ENCODE measurements at regions of chr6 and their contacts with region 1.

Region 1: DNA sequence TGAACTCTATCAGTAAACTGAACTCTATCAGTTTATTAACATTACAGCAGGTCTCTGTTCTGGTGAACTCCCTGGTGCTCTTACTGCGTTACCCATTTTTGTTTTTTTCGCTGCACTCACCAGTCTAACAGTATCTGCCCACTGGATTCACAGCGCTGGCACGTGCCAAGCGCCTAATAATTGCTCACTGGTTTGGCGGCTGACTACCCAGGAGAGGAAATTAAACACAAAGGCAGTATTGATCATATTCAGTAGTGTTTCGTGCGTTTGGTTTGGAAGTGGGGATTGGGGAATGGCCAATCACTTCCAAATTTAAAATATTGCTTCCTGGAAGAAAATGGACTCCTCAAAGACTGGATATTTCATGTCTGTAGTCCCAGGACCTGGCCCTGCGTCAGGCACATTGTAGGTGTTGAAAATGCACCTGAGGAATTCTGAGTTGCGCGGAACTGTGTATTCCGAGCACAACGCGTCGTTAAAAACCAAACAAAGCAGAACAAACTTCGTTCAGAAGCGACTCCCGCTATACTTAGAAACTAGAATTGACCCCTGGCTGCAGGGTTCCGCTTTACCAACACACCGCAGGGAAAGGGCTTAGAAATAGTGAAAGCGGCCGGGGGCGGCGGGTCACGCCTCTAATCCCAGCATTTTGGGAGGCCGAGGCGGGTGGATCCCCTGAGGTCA is 1.1 kb upstream of the RPS12 start:
- DNase-seq: peak; percentile 33
- ATAC-seq: peak; percentile 17
- H3K4me3 Mint-ChIP-seq: peak overlapping the region; percentile 98
- H3K27ac Mint-ChIP-seq: peak overlapping the region; percentile 99
- H3K4me1 Mint-ChIP-seq: peaks cover 47% of the 10 kb centered on the region
- H3K27me3 Mint-ChIP-seq: no peaks in the 10 kb centered on the region
- CTCF ChIP-seq: no peak

Region 2: GRCh38 chr6:131627724-131628682 is 1185.3 kb before region 1 on chr6 and contains the start of gene MED23:
- CTCF ChIA-PET with region 1: no interaction called
- POLR2A ChIA-PET with region 1: no interaction called
- intact Hi-C with region 1: loop called (anchors 2 kb)
- DNase-seq: peak; percentile 98
- ATAC-seq: peak; percentile 95
- H3K4me3 Mint-ChIP-seq: peak within 1 kb of the TSS; percentile 99
- H3K27ac Mint-ChIP-seq: peak within 1 kb of the TSS; percentile 94
- H3K4me1 Mint-ChIP-seq: peaks cover 31% of the 10 kb centered on the region
- H3K27me3 Mint-ChIP-seq: no peaks in the 10 kb centered on the region
- CTCF ChIP-seq: peak; percentile 62
- total RNA-seq, gene MED23: 45.3 and 51.0 TPM in 2 replicates

Region 3: GRCh38 chr6:132354512-132355167 is 458.7 kb before region 1 on chr6:
- CTCF ChIA-PET with region 1: no interaction called
- POLR2A ChIA-PET with region 1: interaction called, 4 read pairs
- intact Hi-C with region 1: loop called (anchors 5 kb)
- DNase-seq: peak; percentile 80
- ATAC-seq: peak; percentile 92
- H3K4me3 Mint-ChIP-seq: peak overlapping the region; percentile 77
- H3K27ac Mint-ChIP-seq: peak overlapping the region; percentile 92
- H3K4me1 Mint-ChIP-seq: peaks cover 74% of the 10 kb centered on the region
- H3K27me3 Mint-ChIP-seq: no peaks in the 10 kb centered on the region
- CTCF ChIP-seq: no peak

Region 4: GRCh38 chr6:132498638-132499037 is 314.7 kb before region 1 on chr6:
- CTCF ChIA-PET with region 1: no interaction called
- POLR2A ChIA-PET with region 1: interaction called, 20 read pairs
- intact Hi-C with region 1: no loop called
- DNase-seq: no peak
- ATAC-seq: peak; percentile 67
- H3K4me3 Mint-ChIP-seq: peak overlapping the region; percentile 55
- H3K27ac Mint-ChIP-seq: peak overlapping the region; percentile 92
- H3K4me1 Mint-ChIP-seq: peaks cover 90% of the 10 kb centered on the region
- H3K27me3 Mint-ChIP-seq: no peaks in the 10 kb centered on the region
- CTCF ChIP-seq: no peak

Region 5: DNA sequence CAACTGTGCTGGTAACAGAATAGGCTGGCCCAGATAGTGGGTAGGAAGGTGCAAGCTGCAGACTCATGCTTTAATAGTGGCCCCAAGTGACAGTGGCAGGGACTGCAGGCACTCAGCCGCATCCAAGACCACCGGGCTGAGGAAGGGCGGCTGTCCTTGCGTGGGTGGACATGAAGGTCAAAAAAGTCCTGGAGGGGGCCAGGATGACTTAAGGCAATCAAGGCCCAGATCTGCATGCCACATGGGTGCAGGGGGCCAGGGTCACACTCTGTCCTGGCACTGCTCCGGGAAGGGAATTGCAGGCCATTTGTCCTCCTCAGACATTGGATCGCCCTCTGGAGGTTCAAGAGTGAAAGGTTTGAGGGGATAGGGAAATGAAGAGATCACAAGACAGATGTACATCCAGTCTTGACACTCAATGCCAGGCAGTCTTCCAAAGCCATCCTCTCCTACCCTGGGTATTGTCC is 45.2 kb before region 1 on chr6:
- CTCF ChIA-PET with region 1: no interaction called
- POLR2A ChIA-PET with region 1: interaction called, 48 read pairs
- intact Hi-C with region 1: loop called (anchors 1 kb)
- DNase-seq: peak; percentile 33
- ATAC-seq: peak; percentile 79
- H3K4me3 Mint-ChIP-seq: peak overlapping the region; percentile 47
- H3K27ac Mint-ChIP-seq: no peak overlapping the region
- H3K4me1 Mint-ChIP-seq: peaks cover 18% of the 10 kb centered on the region
- H3K27me3 Mint-ChIP-seq: no peaks in the 10 kb centered on the region
- CTCF ChIP-seq: peak; percentile 30

Region 6: GRCh38 chr6:133952815-133953633 is 1139.7 kb after region 1 on chr6 and contains the start of gene TBPL1:
- CTCF ChIA-PET with region 1: no interaction called
- POLR2A ChIA-PET with region 1: interaction called, 14 read pairs
- intact Hi-C with region 1: loop called (anchors 1 kb)
- DNase-seq: peak; percentile 83
- ATAC-seq: peak; percentile 84
- H3K4me3 Mint-ChIP-seq: peak within 1 kb of the TSS; percentile 95
- H3K27ac Mint-ChIP-seq: peak within 1 kb of the TSS; percentile 98
- H3K4me1 Mint-ChIP-seq: peaks cover 53% of the 10 kb centered on the region
- H3K27me3 Mint-ChIP-seq: no peaks in the 10 kb centered on the region
- CTCF ChIP-seq: no peak
- total RNA-seq, gene TBPL1: 33.0 and 35.7 TPM in 2 replicates